HAP-1 (cell line): ENCODE measurements at regions of chr16 and their contacts with region 1.

Region 1: DNA sequence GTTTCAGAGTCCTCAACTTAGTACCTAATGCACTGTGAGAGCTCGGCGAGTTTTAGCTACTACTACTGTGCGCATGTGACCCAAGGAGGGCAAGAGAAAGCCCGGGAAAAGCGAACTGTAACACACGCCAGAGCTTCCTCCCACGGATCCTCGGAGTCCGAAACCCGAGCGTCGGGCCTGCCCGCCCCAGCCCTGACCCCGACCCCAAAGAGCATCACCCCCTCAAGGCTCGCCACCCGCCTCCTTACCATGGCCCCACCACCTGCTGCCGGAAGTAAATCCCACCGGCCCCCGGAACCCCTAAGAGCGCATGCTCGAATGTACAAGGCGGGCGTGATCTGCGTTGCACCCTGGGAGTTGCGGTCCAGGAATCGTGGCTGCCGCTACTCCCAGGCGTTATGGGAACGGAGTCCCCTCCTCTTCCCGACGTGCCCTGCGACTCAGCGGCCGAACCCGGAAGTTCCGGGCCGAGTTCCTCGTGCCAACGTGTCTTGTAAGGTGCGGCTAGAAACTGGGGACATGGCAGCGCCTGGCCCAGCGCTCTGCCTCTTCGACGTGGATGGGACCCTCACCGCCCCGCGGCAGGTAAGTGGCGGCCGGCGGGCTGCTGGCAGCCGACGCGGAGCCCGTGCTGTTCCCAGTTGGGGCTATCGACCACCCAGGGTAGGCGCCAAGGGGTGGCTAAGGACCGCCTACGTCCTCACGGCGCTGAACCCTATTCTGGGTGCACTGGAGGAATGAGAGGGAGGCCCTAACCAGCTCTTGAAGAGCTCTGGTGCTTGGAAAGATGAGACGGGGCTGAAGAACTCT is at the starts of genes PMM2 and TMEM186:
- DNase-seq: peak; percentile 96 to 97
- H3K4me3 ChIP-seq: peak within 1 kb of the TSS; percentile 98
- H3K4me1 ChIP-seq: peaks cover 16% of the 10 kb centered on the region
- H3K27me3 ChIP-seq: no peaks in the 10 kb centered on the region

Region 2: DNA sequence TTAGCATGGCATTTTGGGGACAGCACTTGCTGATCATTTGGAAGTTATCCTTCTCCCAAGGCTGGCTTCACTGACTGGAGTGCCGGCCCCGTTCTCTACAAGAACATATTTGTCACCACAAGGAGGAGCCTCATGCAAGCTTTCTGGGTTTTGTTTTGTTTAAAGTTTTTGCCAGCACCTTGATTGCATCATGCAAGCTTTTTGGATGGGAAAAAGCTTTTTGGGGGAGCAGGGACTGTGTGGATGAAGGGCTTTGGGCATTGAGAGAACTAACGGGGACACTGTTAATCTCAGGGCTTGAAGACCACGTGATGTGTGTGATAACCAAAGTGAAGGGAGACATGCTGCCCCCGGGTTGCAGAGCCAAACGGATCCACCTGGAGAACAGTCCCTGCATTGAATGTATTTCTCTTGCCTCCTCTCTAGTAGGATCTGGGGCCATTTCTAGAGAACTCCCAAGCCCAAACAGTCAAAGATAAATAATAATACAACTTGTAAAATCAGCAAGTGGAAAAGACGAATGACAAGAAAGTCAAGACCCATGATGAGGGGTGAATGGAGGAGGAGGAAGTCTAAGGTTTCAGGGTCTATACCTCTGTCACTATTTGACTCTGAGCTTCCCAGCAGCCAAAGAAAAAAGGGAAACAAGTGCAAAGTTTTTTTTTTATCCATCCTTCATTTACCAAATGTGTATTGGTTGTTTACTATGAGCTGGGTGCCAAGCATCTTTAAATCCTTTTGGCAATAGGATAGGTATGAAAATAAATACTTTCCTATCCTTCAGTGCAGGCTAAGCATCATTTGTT is 224.4 kb before region 1 on chr16:
- in situ Hi-C with region 1: loop called (anchors 5 kb)
- DNase-seq: peak; percentile 35 to 54
- H3K4me3 ChIP-seq: no peak overlapping the region
- H3K4me1 ChIP-seq: peaks cover 18% of the 10 kb centered on the region
- H3K27me3 ChIP-seq: peaks cover 20% of the 10 kb centered on the region

Region 3: DNA sequence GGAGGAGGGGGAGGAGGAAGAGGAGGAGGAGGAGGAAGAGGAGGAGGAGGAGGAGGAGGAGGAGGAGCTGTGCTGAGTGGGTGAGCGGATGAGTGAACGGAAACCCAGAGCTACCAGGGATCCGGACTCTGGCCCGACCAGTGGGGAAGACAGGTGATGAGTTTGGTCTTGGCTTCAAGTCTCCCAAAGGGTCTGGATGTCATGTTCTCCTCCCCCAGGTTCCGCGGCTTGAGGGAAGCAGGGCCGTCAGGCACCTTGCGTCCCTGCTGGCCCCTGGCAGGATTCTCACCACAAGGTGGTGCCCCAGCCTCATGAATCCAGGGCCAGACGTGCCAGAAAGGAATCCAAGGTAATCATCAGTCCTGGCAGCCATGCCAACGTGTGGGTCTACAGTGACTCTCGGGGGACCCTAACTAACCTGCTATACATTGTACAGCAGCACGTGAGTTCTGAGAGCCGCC is 136.7 kb before region 1 on chr16:
- in situ Hi-C with region 1: loop called (anchors 5 kb)
- DNase-seq: peak; percentile 52 to 84
- H3K4me3 ChIP-seq: no peak overlapping the region
- H3K4me1 ChIP-seq: no peaks in the 10 kb centered on the region
- H3K27me3 ChIP-seq: no peaks in the 10 kb centered on the region; the same call in 1 of the 2 replicates

Region 4: DNA sequence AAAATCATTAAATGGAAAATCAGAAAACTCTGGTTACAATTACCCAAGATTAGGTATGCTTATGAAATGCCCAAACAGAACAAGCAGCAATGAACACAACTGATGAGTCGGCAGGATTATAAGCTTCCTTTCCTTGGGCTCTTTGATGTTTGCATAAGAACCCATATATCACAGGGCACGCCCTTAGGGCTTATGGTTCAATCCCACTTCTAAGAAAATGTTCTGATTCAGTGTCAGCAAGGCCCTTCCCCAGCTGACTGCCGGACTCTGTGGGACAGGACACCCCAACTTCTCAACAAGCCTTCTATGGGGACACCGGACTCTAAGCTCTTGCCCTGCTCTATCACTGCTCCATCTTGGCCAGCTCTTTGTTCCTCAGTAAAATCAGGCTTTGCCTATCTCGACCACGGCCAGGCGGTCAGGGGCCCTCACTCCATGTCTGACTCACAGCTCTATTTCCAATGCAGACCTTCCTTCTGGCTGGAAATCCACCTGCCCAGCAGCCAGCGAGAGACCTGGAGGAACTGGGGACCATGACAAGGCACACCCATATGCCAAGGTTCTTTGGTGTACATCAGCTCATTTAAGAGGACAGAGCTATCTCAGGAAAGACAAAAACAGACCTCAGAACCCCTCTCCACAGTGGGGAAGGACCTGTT is 111.4 kb after region 1 on chr16:
- in situ Hi-C with region 1: no loop called
- DNase-seq: no peak
- H3K4me3 ChIP-seq: no peak overlapping the region
- H3K4me1 ChIP-seq: no peaks in the 10 kb centered on the region
- H3K27me3 ChIP-seq: no peaks in the 10 kb centered on the region